ENCODE measurements at regions of chr3 and their contacts with region 1.

Region 1: DNA sequence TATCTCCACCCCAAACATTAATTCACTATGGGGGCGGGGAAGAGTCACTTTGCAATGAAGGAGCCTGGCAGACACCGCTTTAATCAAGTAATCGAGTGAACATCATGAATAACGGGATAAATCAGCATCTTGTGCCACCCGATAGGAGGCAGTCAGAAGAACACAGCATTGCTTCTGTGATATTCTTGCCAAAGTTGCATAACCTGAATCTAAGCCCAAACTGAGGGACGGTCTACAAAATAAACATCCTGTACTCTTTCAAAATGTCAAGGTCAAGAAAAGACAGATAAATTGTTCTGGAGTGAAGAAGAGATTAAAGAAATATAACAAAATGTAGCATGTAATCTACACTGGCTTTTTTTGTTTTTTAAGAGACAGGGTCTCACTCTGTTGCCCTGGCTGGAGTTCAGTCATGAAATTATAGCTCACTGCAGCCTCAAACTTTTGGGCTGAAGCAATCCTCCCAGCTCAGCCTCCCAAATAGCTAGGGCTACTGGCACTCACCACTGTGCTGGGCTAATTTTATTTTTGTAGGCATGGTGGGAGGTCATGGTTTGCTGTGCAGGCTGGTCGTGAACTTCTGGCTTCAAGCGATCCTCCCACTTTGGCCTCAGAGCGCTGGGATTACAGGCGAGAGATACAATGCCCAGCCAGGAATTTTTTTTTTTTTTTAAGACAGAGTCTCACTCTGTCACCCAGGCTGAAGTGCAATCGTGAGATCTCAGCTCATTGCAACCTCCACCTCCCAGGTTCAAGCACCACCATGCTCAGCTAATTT is 20.1 kb upstream of the VWA5B2 start:
- DNase-seq: no peak
- ATAC-seq: no peak
- H3K4me3 Mint-ChIP-seq: no peak overlapping the region
- H3K27ac Mint-ChIP-seq: no peak overlapping the region
- H3K4me1 Mint-ChIP-seq: no peaks in the 10 kb centered on the region
- H3K27me3 Mint-ChIP-seq: peaks cover 15% of the 10 kb centered on the region

Region 2: GRCh38 chr3:184196536-184196935 is 12.8 kb before region 1 on chr3:
- CTCF ChIA-PET with region 1: no interaction called
- POLR2A ChIA-PET with region 1: no interaction called
- intact Hi-C with region 1: loop called in 1 of 2 experiments (anchors 1 kb)
- DNase-seq: no peak
- ATAC-seq: no peak
- H3K4me3 Mint-ChIP-seq: no peak overlapping the region
- H3K27ac Mint-ChIP-seq: no peak overlapping the region
- H3K4me1 Mint-ChIP-seq: no peaks in the 10 kb centered on the region
- H3K27me3 Mint-ChIP-seq: no peaks in the 10 kb centered on the region

Measured in activated CD4-positive, alpha-beta T cell treated with anti-CD3 and anti-CD28 coated beads for 36 hours (primary cell).